ENCODE measurements at regions of chr1 and their contacts with region 1.

Region 1: DNA sequence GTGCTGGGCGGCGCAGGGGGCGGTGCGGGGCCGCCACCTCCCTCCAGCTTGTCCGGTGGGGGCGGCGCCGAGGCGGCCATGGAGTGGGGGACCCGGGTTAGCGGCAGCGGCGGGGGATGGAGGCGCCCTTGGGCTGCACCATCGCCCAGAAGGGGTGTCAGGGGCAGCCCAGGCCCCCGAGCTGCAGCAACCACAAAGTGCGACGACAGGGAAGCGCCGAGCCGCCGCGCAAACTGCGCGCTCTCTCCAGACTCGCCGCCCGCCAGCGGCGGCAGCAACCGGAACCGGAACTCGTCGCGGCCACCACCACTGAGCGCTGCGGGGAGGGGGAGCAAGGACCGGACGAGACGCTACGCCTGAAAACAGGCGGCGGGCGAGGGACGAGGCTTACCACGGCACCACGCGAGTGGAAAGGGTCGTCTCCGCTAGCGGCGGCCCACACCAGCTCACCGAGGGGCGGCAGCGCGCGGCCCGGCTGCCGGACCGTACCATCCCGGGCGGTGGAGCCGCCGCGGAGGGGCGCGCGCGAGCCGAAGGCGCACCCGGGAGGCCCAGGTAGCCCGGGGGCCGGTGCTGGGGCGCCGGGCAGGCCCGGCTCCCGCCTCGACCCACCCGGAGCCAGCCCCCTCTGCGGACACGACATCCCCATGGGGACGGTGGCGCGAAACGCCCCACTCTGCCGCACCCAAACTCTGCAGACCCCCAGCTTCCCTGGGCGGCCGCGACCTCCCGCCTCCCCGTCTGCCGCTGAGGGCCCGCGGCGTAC is at the start of gene PYGO2:
- DNase-seq: peak; percentile 72
- H3K4me3 ChIP-seq: peak within 1 kb of the TSS; percentile 70 to 88
- H3K27ac ChIP-seq: peak within 1 kb of the TSS; percentile 98 to 99
- H3K4me1 ChIP-seq: peaks cover 16% of the 10 kb centered on the region
- H3K27me3 ChIP-seq: no peaks in the 10 kb centered on the region
- CTCF ChIP-seq: peak; percentile 71 to 96 (median 91)
- POLR2A ChIP-seq: peak; percentile 59
- total RNA-seq, gene PYGO2: 44.1 to 44.6 TPM

Region 2: GRCh38 chr1:154906621-154907081 is 55.0 kb before region 1 on chr1:
- intact Hi-C with region 1: no loop called
- DNase-seq: no peak
- H3K4me3 ChIP-seq: no peak overlapping the region
- H3K27ac ChIP-seq: no peak overlapping the region
- H3K4me1 ChIP-seq: no peaks in the 10 kb centered on the region
- H3K27me3 ChIP-seq: no peaks in the 10 kb centered on the region
- CTCF ChIP-seq: peak in 3 of 4 experiments; percentile 20 to 54 (median 47)
- POLR2A ChIP-seq: no peak

Region 3: GRCh38 chr1:155001675-155002463 is 40.2 kb after region 1 on chr1:
- intact Hi-C with region 1: loop called (anchors 5 kb)
- DNase-seq: peak; percentile 100
- H3K4me3 ChIP-seq: peak overlapping the region; percentile 68 to 97
- H3K27ac ChIP-seq: peak overlapping the region; percentile 100
- H3K4me1 ChIP-seq: peaks cover 23% of the 10 kb centered on the region
- H3K27me3 ChIP-seq: no peaks in the 10 kb centered on the region
- CTCF ChIP-seq: peak in 3 of 4 experiments; percentile 43 to 60 (median 48)
- POLR2A ChIP-seq: peak; percentile 75

Region 4: GRCh38 chr1:155017041-155017945 is 55.6 kb after region 1 on chr1:
- intact Hi-C with region 1: loop called (anchors 1 kb)
- DNase-seq: peak; percentile 84
- H3K4me3 ChIP-seq: peak overlapping the region; percentile 21 to 26
- H3K27ac ChIP-seq: peak overlapping the region; percentile 80 to 87
- H3K4me1 ChIP-seq: peaks cover 18% of the 10 kb centered on the region
- H3K27me3 ChIP-seq: no peaks in the 10 kb centered on the region
- CTCF ChIP-seq: peak; percentile 94 to 100 (median 100)
- POLR2A ChIP-seq: peak; percentile 62

Region 5: DNA sequence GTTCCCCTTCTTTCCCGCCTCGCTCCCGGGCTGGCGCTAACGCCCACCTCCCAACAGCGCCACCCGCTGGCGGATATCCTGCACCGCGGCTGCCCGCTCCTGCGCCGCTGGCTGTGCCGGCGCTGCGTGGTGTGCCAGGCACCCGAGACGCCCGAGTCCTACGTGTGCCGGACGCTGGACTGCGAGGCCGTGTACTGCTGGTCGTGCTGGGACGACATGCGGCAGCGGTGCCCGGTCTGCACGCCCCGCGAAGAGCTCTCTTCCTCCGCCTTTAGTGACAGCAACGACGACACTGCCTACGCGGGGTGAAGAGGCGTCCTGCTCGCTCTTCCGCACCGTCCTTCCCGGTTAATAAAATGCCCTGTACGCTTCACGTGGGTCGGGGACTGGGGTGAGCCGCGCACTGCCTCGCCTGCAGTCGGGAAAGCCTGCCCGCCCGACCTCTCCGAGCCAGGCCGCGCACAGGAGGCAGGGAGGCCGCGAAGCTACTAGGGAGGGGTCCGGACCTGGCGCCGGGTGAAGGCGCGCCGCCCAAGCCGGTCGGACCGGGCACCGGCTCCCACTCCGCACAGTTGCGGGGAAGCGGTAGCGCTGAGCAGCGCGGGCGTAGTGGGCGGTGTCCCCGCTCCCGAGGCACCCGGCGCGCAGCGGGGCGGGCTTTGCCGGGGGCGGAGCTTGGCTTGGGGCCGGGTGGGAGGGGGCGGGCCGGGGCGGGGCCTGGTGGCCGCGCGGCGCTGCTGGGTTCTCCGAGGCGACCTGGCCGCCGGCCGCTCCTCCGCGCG is 89.1 kb after region 1 on chr1 and contains the start of gene ADAM15:
- intact Hi-C with region 1: loop called (anchors 5 kb)
- DNase-seq: peak; percentile 77
- H3K4me3 ChIP-seq: peak within 1 kb of the TSS; percentile 71 to 74
- H3K27ac ChIP-seq: peak within 1 kb of the TSS; percentile 92 to 93
- H3K4me1 ChIP-seq: peaks cover 19% of the 10 kb centered on the region
- H3K27me3 ChIP-seq: no peaks in the 10 kb centered on the region
- CTCF ChIP-seq: peak; percentile 83 to 96 (median 90)
- POLR2A ChIP-seq: peak; percentile 17
- total RNA-seq, gene ADAM15: 72.5 to 138 TPM

Measured in prostate gland (tissue), 2 donors.